CD8-positive, alpha-beta T cell (primary cell): ENCODE measurements at regions of chr14 and their contacts with region 1.

Region 1: GRCh38 chr14:95993768-95994592 is 45.2 kb upstream of the C14orf132 start:
- DNase-seq: peak in 4 of 9 experiments; percentile 20 to 57 (median 34)
- ATAC-seq: no peak
- H3K4me3 ChIP-seq: no peak overlapping the region
- H3K4me3 Mint-ChIP-seq: no peak overlapping the region
- H3K27ac ChIP-seq: no peak overlapping the region
- H3K27ac Mint-ChIP-seq: no peak overlapping the region
- H3K4me1 ChIP-seq: no peaks in the 10 kb centered on the region
- H3K4me1 Mint-ChIP-seq: no peaks in the 10 kb centered on the region
- H3K27me3 ChIP-seq: peaks cover 4 to 8% of the 10 kb centered on the region in 2 experiments
- H3K27me3 Mint-ChIP-seq: peaks cover 31% of the 10 kb centered on the region
- CTCF ChIP-seq: peak; percentile 78

Region 2: DNA sequence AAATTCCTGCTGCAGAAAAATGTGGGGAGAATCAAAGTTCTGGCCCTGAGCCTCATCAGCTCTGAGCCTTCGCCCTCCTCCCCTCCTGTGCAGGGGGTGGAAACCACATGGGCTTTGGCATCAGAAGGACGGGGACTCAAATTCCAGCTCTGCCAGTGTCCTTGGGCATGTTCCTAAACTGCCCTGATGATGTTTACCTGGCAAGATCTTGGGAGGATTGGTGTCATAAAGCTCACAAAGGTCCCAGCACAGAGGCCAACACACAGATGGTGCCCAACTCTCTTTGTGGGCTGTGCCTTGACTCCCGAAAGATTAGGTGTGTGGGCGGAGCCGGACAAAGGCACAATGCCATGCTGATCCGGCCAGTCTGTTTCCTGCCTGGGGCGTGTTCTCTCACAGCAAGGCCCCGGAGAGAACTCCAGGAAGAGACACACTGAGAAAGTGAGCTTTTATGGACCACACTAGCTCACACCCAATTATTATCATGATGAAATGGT is 653.7 kb before region 1 on chr14:
- CTCF ChIA-PET with region 1: no interaction called
- POLR2A ChIA-PET with region 1: no interaction called
- intact Hi-C with region 1: no loop called
- DNase-seq: no peak
- ATAC-seq: no peak
- H3K4me3 ChIP-seq: no peak overlapping the region
- H3K4me3 Mint-ChIP-seq: no peak overlapping the region
- H3K27ac ChIP-seq: no peak overlapping the region
- H3K27ac Mint-ChIP-seq: no peak overlapping the region
- H3K4me1 ChIP-seq: no peaks in the 10 kb centered on the region
- H3K4me1 Mint-ChIP-seq: no peaks in the 10 kb centered on the region
- H3K27me3 ChIP-seq: peaks cover 0 to 4% of the 10 kb centered on the region in 2 experiments
- H3K27me3 Mint-ChIP-seq: peaks cover 19% of the 10 kb centered on the region
- CTCF ChIP-seq: no peak

Region 3: GRCh38 chr14:95431199-95432143 is 562.5 kb before region 1 on chr14:
- CTCF ChIA-PET with region 1: no interaction called
- POLR2A ChIA-PET with region 1: no interaction called
- intact Hi-C with region 1: loop called (anchors 2 to 5 kb)
- DNase-seq: peak in 1 of 9 experiments; percentile 20
- ATAC-seq: no peak
- H3K4me3 ChIP-seq: no peak overlapping the region
- H3K4me3 Mint-ChIP-seq: no peak overlapping the region
- H3K27ac ChIP-seq: no peak overlapping the region
- H3K27ac Mint-ChIP-seq: peak overlapping the region; percentile 37
- H3K4me1 ChIP-seq: no peaks in the 10 kb centered on the region
- H3K4me1 Mint-ChIP-seq: peaks cover 3% of the 10 kb centered on the region
- H3K27me3 ChIP-seq: no peaks in the 10 kb centered on the region
- H3K27me3 Mint-ChIP-seq: no peaks in the 10 kb centered on the region
- CTCF ChIP-seq: peak; percentile 12

Region 4: GRCh38 chr14:95850417-95850816 is 143.6 kb before region 1 on chr14:
- CTCF ChIA-PET with region 1: no interaction called
- POLR2A ChIA-PET with region 1: no interaction called
- intact Hi-C with region 1: no loop called
- DNase-seq: no peak
- ATAC-seq: no peak
- H3K4me3 ChIP-seq: no peak overlapping the region
- H3K4me3 Mint-ChIP-seq: no peak overlapping the region
- H3K27ac ChIP-seq: no peak overlapping the region
- H3K27ac Mint-ChIP-seq: no peak overlapping the region
- H3K4me1 ChIP-seq: no peaks in the 10 kb centered on the region
- H3K4me1 Mint-ChIP-seq: no peaks in the 10 kb centered on the region
- H3K27me3 ChIP-seq: no peaks in the 10 kb centered on the region
- H3K27me3 Mint-ChIP-seq: peaks cover 26% of the 10 kb centered on the region
- CTCF ChIP-seq: no peak

Region 5: GRCh38 chr14:95895720-95896119 is 98.3 kb before region 1 on chr14:
- CTCF ChIA-PET with region 1: interaction called, 10 read pairs
- POLR2A ChIA-PET with region 1: no interaction called
- intact Hi-C with region 1: loop called in 1 of 2 experiments (anchors 5 kb)
- DNase-seq: peak in 3 of 9 experiments; percentile 6 to 18 (median 10)
- ATAC-seq: no peak
- H3K4me3 ChIP-seq: no peak overlapping the region
- H3K4me3 Mint-ChIP-seq: no peak overlapping the region
- H3K27ac ChIP-seq: no peak overlapping the region
- H3K27ac Mint-ChIP-seq: no peak overlapping the region
- H3K4me1 ChIP-seq: no peaks in the 10 kb centered on the region
- H3K4me1 Mint-ChIP-seq: no peaks in the 10 kb centered on the region
- H3K27me3 ChIP-seq: no peaks in the 10 kb centered on the region
- H3K27me3 Mint-ChIP-seq: peaks cover 16% of the 10 kb centered on the region
- CTCF ChIP-seq: no peak

Region 6: GRCh38 chr14:96011607-96012006 is 17.6 kb after region 1 on chr14:
- CTCF ChIA-PET with region 1: interaction called, 10 read pairs
- POLR2A ChIA-PET with region 1: no interaction called
- intact Hi-C with region 1: no loop called
- DNase-seq: no peak
- ATAC-seq: no peak
- H3K4me3 ChIP-seq: no peak overlapping the region
- H3K4me3 Mint-ChIP-seq: no peak overlapping the region
- H3K27ac ChIP-seq: no peak overlapping the region
- H3K27ac Mint-ChIP-seq: no peak overlapping the region
- H3K4me1 ChIP-seq: no peaks in the 10 kb centered on the region
- H3K4me1 Mint-ChIP-seq: no peaks in the 10 kb centered on the region
- H3K27me3 ChIP-seq: no peaks in the 10 kb centered on the region
- H3K27me3 Mint-ChIP-seq: no peaks in the 10 kb centered on the region
- CTCF ChIP-seq: no peak

Region 7: DNA sequence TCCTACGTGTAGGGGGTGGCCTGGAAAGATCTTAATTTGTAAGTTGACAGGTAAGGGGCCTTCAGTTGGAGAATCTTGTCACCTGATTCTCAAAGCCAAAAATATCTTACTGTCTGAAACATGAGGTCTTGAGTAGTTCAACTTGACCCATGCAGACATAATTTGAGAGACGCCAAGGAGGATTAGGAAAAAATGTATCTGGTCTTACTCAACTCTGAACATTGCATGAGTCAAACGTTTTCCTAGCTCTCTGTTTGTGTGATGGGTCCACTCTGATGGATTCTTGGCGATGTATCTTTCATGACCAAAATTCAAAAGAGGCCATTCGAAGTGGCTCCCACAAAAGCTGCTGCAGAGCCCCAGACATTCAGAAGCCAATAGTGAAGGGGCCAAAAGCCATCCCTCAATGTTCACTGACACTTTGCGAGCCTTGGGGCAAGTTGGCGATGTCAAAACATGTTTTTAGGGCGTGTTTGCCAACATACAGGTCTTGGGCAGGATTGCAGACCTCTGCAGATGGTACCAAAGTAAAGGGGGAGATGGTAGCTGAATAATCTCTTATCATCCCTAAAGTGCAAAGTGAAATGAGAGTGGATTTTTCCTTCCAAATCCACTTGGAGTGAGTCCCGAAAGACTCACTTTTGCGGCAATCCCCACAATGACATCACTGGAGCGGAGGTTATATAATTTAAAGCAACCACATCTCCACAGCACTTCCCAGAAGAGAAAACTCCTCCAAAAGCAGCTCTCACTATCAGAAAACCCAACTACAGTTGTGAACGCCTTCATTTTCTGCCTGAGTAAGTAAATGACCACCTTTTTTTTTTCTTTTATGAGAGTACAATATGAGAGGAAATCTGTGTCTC is 261.8 kb after region 1 on chr14 and contains the start of gene BDKRB1:
- CTCF ChIA-PET with region 1: no interaction called
- POLR2A ChIA-PET with region 1: no interaction called
- intact Hi-C with region 1: no loop called
- DNase-seq: no peak
- ATAC-seq: no peak
- H3K4me3 ChIP-seq: no peak within 1 kb of the TSS
- H3K4me3 Mint-ChIP-seq: no peak within 1 kb of the TSS
- H3K27ac ChIP-seq: no peak within 1 kb of the TSS
- H3K27ac Mint-ChIP-seq: no peak within 1 kb of the TSS
- H3K4me1 ChIP-seq: no peaks in the 10 kb centered on the region
- H3K4me1 Mint-ChIP-seq: no peaks in the 10 kb centered on the region
- H3K27me3 ChIP-seq: peaks cover 0 to 3% of the 10 kb centered on the region in 2 experiments
- H3K27me3 Mint-ChIP-seq: peaks cover 33% of the 10 kb centered on the region
- CTCF ChIP-seq: no peak
- total RNA-seq, gene BDKRB1: not detected